ENCODE measurements at regions of chr17 and their contacts with region 1.

Region 1: DNA sequence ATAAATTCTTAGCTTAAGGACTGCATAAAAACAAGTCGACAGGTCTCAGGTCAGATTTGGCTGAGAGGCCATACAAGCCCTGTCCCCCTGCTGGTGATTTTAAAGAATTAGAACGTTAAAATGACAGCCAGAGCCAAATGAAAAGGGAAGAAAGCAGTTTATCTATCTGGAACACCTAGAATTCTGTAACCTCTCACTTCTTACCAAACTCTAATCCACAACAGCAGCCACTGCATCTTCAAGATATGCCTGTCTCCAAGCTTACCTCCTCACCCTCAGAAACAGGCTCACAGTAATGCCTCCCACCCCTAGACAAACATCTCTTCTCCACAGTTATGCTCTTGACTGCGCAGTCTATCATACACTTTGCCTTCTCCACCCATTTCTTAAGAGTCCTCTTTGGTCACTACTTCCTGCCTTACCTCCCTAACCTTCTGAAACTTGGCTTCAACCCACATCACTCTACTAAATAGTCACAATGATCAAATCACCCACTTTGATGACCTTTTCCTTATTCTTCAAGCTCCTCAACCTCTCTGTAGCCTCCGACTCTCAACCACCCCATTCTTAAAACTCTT is 14.2 kb downstream of the ANKFY1 start:
- DNase-seq: peak in 2 of 5 donors; percentile 19 to 20
- H3K4me3 ChIP-seq: no peak overlapping the region
- H3K4me3 Mint-ChIP-seq: peak overlapping the region in 1 of 8 donors; percentile 2
- H3K27ac ChIP-seq: no peak overlapping the region
- H3K27ac Mint-ChIP-seq: peak overlapping the region in 6 of 7 donors; percentile 1 to 82 (median 28)
- H3K4me1 ChIP-seq: peaks cover 50% of the 10 kb centered on the region
- H3K4me1 Mint-ChIP-seq: peaks cover 34 to 73% (median 56%) of the 10 kb centered on the region in 4 donors
- H3K27me3 ChIP-seq: no peaks in the 10 kb centered on the region
- H3K27me3 Mint-ChIP-seq: no peaks in the 10 kb centered on the region

Region 2: DNA sequence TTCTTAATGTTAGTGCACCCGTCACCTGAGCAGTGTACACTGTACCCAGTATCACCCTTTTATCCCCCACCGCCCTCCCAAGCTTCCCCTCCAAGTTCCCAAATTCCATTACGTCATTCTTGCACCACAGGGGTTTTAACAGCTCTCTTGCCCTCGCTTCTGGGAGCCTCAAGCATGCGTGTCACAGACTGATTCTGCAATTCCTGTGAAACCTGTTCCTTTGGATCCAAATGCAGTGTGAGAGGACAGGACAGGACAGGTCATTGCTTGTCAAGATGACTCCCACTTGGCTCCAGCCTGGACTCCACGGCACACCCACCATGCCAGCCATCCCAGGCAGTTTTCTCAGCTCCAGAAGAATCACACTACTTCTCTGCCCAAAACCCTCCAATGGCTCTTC is 62.5 kb before region 1 on chr17:
- CTCF ChIA-PET with region 1: no interaction called
- POLR2A ChIA-PET with region 1: no interaction called
- intact Hi-C with region 1: no loop called
- DNase-seq: no peak
- H3K4me3 ChIP-seq: no peak overlapping the region
- H3K4me3 Mint-ChIP-seq: no peak overlapping the region
- H3K27ac ChIP-seq: no peak overlapping the region
- H3K27ac Mint-ChIP-seq: peak overlapping the region in 3 of 7 donors; percentile 42 to 72 (median 60)
- H3K4me1 ChIP-seq: peaks cover 8% of the 10 kb centered on the region
- H3K4me1 Mint-ChIP-seq: peaks cover 6 to 16% (median 8%) of the 10 kb centered on the region in 4 donors
- H3K27me3 ChIP-seq: no peaks in the 10 kb centered on the region
- H3K27me3 Mint-ChIP-seq: no peaks in the 10 kb centered on the region

Region 3: GRCh38 chr17:4229627-4230541 is 19.7 kb before region 1 on chr17:
- CTCF ChIA-PET with region 1: interaction called, 12 read pairs
- POLR2A ChIA-PET with region 1: no interaction called
- intact Hi-C with region 1: no loop called
- DNase-seq: no peak
- H3K4me3 ChIP-seq: no peak overlapping the region
- H3K4me3 Mint-ChIP-seq: no peak overlapping the region
- H3K27ac ChIP-seq: no peak overlapping the region
- H3K27ac Mint-ChIP-seq: peak overlapping the region in 3 of 7 donors; percentile 42 to 70 (median 50)
- H3K4me1 ChIP-seq: peaks cover 21% of the 10 kb centered on the region
- H3K4me1 Mint-ChIP-seq: peaks cover 18 to 25% (median 19%) of the 10 kb centered on the region in 4 donors
- H3K27me3 ChIP-seq: no peaks in the 10 kb centered on the region
- H3K27me3 Mint-ChIP-seq: no peaks in the 10 kb centered on the region

Region 4: GRCh38 chr17:4263282-4264215 is 14.0 kb after region 1 on chr17 and contains the start of gene ANKFY1:
- CTCF ChIA-PET with region 1: interaction called, 36 read pairs
- POLR2A ChIA-PET with region 1: interaction called, 5 read pairs
- intact Hi-C with region 1: no loop called
- DNase-seq: peak; percentile 96 to 99 (median 98)
- H3K4me3 ChIP-seq: peak within 1 kb of the TSS; percentile 74 to 86
- H3K4me3 Mint-ChIP-seq: peak within 1 kb of the TSS; percentile 91 to 98 (median 94)
- H3K27ac ChIP-seq: peak within 1 kb of the TSS; percentile 87
- H3K27ac Mint-ChIP-seq: peak within 1 kb of the TSS; percentile 91 to 97 (median 96)
- H3K4me1 ChIP-seq: peaks cover 37% of the 10 kb centered on the region
- H3K4me1 Mint-ChIP-seq: peaks cover 32 to 50% (median 39%) of the 10 kb centered on the region in 4 donors
- H3K27me3 ChIP-seq: no peaks in the 10 kb centered on the region
- H3K27me3 Mint-ChIP-seq: no peaks in the 10 kb centered on the region
- total RNA-seq, gene ANKFY1: 72.7 to 74.7 TPM

Region 5: GRCh38 chr17:4540224-4540641 is 290.7 kb after region 1 on chr17:
- CTCF ChIA-PET with region 1: no interaction called
- POLR2A ChIA-PET with region 1: no interaction called
- intact Hi-C with region 1: no loop called
- DNase-seq: no peak
- H3K4me3 ChIP-seq: no peak overlapping the region
- H3K4me3 Mint-ChIP-seq: no peak overlapping the region
- H3K27ac ChIP-seq: no peak overlapping the region
- H3K27ac Mint-ChIP-seq: no peak overlapping the region
- H3K4me1 ChIP-seq: no peaks in the 10 kb centered on the region
- H3K4me1 Mint-ChIP-seq: peaks cover 0 to 4% (median 0%) of the 10 kb centered on the region in 4 donors
- H3K27me3 ChIP-seq: no peaks in the 10 kb centered on the region
- H3K27me3 Mint-ChIP-seq: no peaks in the 10 kb centered on the region